CD4-positive, alpha-beta memory T cell (primary cell): ENCODE measurements at regions of chr17 and their contacts with region 1.

Region 1: GRCh38 chr17:7323731-7324437 is 5.3 kb downstream of the NEURL4 start:
- DNase-seq: peak; percentile 50 to 72 (median 56)
- H3K4me3 ChIP-seq: no peak overlapping the region
- H3K4me3 Mint-ChIP-seq: no peak overlapping the region
- H3K27ac ChIP-seq: no peak overlapping the region
- H3K27ac Mint-ChIP-seq: peak overlapping the region in 3 of 7 donors; percentile 18 to 78 (median 55)
- H3K4me1 ChIP-seq: peaks cover 20% of the 10 kb centered on the region
- H3K4me1 Mint-ChIP-seq: peaks cover 17 to 28% (median 18%) of the 10 kb centered on the region in 4 donors
- H3K27me3 ChIP-seq: no peaks in the 10 kb centered on the region
- H3K27me3 Mint-ChIP-seq: no peaks in the 10 kb centered on the region

Region 2: DNA sequence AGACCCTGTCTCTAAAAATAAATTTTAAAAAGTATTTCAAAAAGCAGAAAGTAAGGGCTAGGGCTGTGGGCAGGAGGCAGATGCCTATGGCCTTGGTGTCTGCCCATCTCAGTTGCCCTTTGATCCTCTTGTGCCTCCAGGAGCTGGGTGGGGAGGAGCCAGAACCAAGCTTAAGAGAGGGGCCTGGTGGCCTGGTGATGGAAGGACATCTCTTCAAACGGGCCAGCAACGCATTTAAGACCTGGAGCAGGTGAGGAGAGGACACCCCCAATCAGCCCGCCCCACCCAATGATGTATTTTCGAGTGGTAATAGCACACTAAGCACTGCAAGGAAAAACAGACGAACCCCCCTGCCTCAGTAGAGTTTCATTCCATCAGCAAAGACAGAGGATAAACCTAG is 20.5 kb after region 1 on chr17:
- CTCF ChIA-PET with region 1: interaction called, 31 read pairs
- POLR2A ChIA-PET with region 1: interaction called, 61 read pairs
- intact Hi-C with region 1: loop called (anchors 1 kb)
- DNase-seq: no peak
- H3K4me3 ChIP-seq: no peak overlapping the region
- H3K4me3 Mint-ChIP-seq: no peak overlapping the region
- H3K27ac ChIP-seq: no peak overlapping the region
- H3K27ac Mint-ChIP-seq: peak overlapping the region in 4 of 7 donors; percentile 13 to 86 (median 62)
- H3K4me1 ChIP-seq: peaks cover 19% of the 10 kb centered on the region
- H3K4me1 Mint-ChIP-seq: peaks cover 16 to 39% (median 27%) of the 10 kb centered on the region in 4 donors
- H3K27me3 ChIP-seq: no peaks in the 10 kb centered on the region
- H3K27me3 Mint-ChIP-seq: no peaks in the 10 kb centered on the region